A673 (cell line): ENCODE measurements at regions of chr11 and their contacts with region 1.

Region 1: DNA sequence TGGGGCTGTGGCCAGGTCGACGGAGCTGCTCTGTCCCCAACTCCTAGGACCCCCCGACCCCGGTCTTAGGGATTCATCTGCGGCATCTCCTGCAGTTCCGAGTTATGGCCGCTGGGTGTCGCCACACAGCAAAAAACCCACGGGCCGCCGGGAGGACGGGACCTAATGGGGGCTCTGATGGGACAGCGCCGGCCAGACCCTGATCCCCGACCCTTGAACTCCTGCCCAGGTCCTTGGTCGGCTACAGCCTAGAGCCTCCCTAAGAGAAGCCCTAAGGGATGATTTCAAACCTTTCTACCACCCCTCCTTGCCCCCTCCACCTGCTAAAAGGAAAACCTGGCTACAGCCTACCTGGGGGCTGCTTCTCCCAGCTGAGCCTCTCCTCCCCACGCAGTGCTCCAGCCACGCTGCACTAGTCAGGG is 30.8 kb upstream of the LRRC10B start:
- DNase-seq: peak; percentile 67
- H3K4me3 ChIP-seq: no peak overlapping the region
- H3K27ac ChIP-seq: no peak overlapping the region
- H3K4me1 ChIP-seq: no peaks in the 10 kb centered on the region
- H3K27me3 ChIP-seq: no peaks in the 10 kb centered on the region
- CTCF ChIP-seq: peak; percentile 99

Region 2: DNA sequence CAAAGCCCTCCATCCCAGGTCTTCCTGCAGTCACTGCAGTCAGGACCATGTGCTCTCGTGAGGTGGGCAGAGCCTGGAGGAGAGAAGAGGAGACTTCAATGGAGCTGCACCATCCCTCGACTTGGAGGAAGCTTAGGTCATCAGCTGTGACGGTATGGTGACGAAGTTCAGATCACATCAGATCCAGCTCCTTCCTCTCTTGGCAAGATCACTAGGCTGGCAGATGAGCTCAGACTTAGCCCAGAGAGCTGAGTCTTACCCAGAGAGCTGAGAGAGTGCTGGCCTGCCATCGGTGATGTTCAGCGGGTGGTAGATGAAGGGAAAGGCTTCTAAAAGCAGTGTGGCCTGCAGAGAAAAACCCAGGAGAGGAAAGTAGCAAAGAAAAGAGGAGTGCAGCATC is 524.0 kb before region 1 on chr11:
- CTCF ChIA-PET with region 1: no interaction called
- POLR2A ChIA-PET with region 1: no interaction called
- intact Hi-C with region 1: no loop called
- DNase-seq: no peak
- H3K4me3 ChIP-seq: no peak overlapping the region
- H3K27ac ChIP-seq: no peak overlapping the region
- H3K4me1 ChIP-seq: no peaks in the 10 kb centered on the region
- H3K27me3 ChIP-seq: no peaks in the 10 kb centered on the region
- CTCF ChIP-seq: no peak

Region 3: GRCh38 chr11:61488651-61489291 is 11.0 kb after region 1 on chr11:
- CTCF ChIA-PET with region 1: interaction called, 4 read pairs
- POLR2A ChIA-PET with region 1: interaction called, 11 read pairs
- intact Hi-C with region 1: no loop called
- DNase-seq: no peak
- H3K4me3 ChIP-seq: no peak overlapping the region
- H3K27ac ChIP-seq: no peak overlapping the region
- H3K4me1 ChIP-seq: peaks cover 7% of the 10 kb centered on the region
- H3K27me3 ChIP-seq: no peaks in the 10 kb centered on the region
- CTCF ChIP-seq: no peak

Region 4: DNA sequence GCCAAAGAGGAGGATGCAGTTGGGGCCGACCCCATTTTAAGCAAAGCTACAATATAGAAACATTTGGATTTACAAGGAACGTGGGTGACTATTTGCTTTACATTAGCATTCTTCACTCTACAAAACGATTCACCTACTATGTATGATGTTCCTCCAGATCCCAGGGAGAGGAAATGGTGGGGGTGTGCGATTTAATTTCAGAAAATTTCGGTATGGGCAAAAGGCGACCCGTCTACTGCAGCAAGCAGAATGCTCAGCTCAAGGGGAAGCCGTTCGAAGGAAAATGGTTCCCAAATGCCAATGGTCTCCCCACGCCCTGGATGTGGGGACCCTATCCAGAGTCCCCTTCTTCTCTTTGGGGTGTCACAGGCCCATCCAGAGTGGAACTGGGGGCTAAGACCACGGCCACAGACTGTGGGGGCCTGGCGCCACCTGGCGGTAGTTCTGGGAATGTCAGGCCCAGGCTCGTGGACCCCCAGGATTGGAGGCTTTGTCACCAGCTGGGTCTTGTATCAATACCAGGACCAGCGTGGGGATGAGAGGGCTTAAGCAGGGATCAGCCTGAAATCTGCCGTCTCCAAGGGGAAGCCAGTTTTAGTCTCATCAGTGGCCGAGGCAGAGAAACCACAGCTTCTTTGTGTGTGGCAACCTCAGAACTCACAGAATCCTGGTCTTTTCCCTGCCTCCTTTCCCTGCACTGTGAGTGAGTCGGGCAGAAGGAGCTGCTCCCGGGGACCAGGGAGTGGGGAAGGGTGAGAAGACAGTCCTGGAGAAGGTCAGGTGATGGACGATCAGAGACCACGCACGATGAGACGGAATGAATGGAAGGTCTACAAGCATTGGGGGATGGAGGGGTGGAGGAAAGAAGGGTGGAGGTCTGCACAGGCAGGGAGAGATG is 39.2 kb after region 1 on chr11:
- CTCF ChIA-PET with region 1: interaction called, 33 read pairs
- POLR2A ChIA-PET with region 1: interaction called, 5 read pairs
- intact Hi-C with region 1: loop called (anchors 1 kb)
- DNase-seq: peak; percentile 84
- H3K4me3 ChIP-seq: peak overlapping the region; percentile 31
- H3K27ac ChIP-seq: peak overlapping the region; percentile 65
- H3K4me1 ChIP-seq: peaks cover 41% of the 10 kb centered on the region
- H3K27me3 ChIP-seq: no peaks in the 10 kb centered on the region
- CTCF ChIP-seq: peak; percentile 100

Region 5: GRCh38 chr11:61532139-61533038 is 54.7 kb after region 1 on chr11:
- CTCF ChIA-PET with region 1: interaction called, 7 read pairs
- POLR2A ChIA-PET with region 1: no interaction called
- intact Hi-C with region 1: loop called (anchors 5 kb)
- DNase-seq: peak; percentile 70
- H3K4me3 ChIP-seq: no peak overlapping the region
- H3K27ac ChIP-seq: no peak overlapping the region
- H3K4me1 ChIP-seq: no peaks in the 10 kb centered on the region
- H3K27me3 ChIP-seq: no peaks in the 10 kb centered on the region
- CTCF ChIP-seq: peak; percentile 98

Region 6: DNA sequence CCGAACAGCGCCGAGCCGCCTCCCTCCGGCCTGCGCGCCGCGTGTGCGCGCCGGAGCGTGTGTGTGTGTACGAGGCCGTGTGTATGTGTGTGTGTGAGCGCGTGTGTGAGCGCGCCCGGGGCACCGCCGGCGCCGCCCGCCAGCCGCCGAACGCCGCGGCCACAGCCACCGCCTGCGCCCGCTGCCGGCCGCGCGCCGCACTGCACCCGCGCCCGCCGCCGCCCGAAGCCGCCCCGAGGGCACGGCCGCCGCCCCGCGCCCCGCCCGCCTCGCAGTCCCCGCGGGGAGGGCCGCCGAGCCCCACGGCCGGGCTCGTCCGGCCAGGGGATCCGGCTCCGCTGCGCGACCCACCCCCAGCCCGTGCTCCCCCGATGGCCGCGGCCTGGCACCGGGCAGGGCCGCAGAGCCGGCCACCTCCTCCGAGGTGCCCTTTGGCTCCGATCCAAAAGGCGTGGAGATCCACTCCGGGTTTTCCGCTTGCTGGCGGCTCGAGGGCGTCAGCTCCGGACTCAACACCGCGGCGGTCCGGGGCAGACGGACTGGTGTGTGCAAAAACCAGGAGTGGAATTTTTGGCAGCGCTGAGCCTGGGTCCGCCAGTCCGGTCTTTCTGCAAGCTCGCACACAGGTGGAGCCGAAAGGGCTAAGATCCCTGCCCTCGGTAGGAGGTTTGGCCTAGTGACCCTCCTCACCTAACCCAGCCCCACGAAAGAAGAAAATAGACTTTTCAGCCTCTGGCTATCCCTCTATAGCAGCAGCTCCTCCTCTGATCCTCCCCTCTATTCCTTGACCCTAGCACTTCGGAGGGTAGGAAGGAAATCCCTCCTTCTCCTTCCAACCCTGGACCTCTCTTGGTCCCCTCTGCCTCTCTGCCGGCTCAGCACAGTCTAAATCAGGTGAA is 103.5 kb after region 1 on chr11 and contains the start of gene SYT7:
- CTCF ChIA-PET with region 1: no interaction called
- POLR2A ChIA-PET with region 1: no interaction called
- intact Hi-C with region 1: loop called (anchors 5 kb)
- DNase-seq: peak; percentile 98
- H3K4me3 ChIP-seq: peak within 1 kb of the TSS; percentile 46
- H3K27ac ChIP-seq: no peak within 1 kb of the TSS
- H3K4me1 ChIP-seq: peaks cover 6% of the 10 kb centered on the region
- H3K27me3 ChIP-seq: peaks cover 24% of the 10 kb centered on the region
- CTCF ChIP-seq: peak; percentile 22; the same call in 1 of the 2 replicates
- total RNA-seq, gene SYT7: 1.3 and 2.0 TPM in 2 replicates

Region 7: GRCh38 chr11:61639816-61640443 is 162.2 kb after region 1 on chr11:
- CTCF ChIA-PET with region 1: interaction called, 8 read pairs
- POLR2A ChIA-PET with region 1: no interaction called
- intact Hi-C with region 1: loop called (anchors 2 kb)
- DNase-seq: no peak
- H3K4me3 ChIP-seq: no peak overlapping the region
- H3K27ac ChIP-seq: no peak overlapping the region
- H3K4me1 ChIP-seq: no peaks in the 10 kb centered on the region
- H3K27me3 ChIP-seq: no peaks in the 10 kb centered on the region
- CTCF ChIP-seq: no peak

Region 8: DNA sequence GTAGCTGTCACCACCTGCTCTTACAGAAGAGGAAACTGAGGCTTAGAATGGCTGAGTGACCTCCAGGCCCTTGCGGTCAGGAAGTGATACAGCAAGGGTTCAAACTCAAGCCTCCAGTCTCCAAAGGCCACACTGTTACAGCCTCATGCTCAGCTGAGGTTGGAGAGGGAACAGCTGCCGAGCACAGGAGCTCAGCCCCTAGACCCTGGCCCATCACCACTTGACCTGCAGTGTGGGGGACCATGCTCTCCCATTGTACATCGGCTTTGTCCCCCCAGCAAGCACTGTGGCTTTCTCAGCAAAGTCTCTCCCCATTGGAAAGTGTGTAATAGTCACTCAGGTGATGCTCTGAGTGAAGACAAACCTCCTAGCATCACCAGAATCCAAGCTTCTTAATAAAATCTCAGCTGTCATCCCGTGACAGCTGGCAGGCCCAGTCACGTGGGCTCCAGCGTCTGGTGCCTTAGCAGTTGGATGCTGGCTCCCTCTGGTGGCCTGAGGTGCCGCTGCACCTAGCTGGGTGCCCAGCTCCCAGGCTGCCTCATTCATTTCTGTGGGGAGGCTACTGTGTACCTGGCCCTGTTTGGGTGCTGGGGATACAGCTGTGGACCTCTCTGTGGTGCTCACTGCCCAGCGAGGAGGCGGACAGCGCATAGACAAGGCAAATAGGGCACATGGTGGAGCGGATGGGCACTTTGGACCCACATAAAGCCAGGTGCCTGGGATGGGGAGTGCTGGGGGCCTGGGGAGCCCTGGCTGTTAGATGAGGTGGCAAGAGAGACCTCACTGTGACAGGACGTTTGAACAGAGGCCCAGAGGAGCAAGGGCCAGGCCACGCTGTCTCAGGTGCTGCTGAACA is 255.6 kb after region 1 on chr11:
- CTCF ChIA-PET with region 1: no interaction called
- POLR2A ChIA-PET with region 1: no interaction called
- intact Hi-C with region 1: loop called (anchors 10 kb)
- DNase-seq: peak; percentile 93
- H3K4me3 ChIP-seq: no peak overlapping the region
- H3K27ac ChIP-seq: no peak overlapping the region
- H3K4me1 ChIP-seq: no peaks in the 10 kb centered on the region
- H3K27me3 ChIP-seq: no peaks in the 10 kb centered on the region
- CTCF ChIP-seq: peak; percentile 100